ENCODE measurements at regions of chr2 and their contacts with region 1.

Region 1: GRCh38 chr2:127591221-127591923 is 54.6 kb upstream of the GPR17 start:
- DNase-seq: peak; percentile 66
- H3K4me3 ChIP-seq: no peak overlapping the region
- H3K27ac ChIP-seq: no peak overlapping the region
- H3K4me1 ChIP-seq: no peaks in the 10 kb centered on the region
- H3K27me3 ChIP-seq: no peaks in the 10 kb centered on the region
- CTCF ChIP-seq: peak; percentile 94 to 99
- POLR2A ChIP-seq: no peak

Region 2: DNA sequence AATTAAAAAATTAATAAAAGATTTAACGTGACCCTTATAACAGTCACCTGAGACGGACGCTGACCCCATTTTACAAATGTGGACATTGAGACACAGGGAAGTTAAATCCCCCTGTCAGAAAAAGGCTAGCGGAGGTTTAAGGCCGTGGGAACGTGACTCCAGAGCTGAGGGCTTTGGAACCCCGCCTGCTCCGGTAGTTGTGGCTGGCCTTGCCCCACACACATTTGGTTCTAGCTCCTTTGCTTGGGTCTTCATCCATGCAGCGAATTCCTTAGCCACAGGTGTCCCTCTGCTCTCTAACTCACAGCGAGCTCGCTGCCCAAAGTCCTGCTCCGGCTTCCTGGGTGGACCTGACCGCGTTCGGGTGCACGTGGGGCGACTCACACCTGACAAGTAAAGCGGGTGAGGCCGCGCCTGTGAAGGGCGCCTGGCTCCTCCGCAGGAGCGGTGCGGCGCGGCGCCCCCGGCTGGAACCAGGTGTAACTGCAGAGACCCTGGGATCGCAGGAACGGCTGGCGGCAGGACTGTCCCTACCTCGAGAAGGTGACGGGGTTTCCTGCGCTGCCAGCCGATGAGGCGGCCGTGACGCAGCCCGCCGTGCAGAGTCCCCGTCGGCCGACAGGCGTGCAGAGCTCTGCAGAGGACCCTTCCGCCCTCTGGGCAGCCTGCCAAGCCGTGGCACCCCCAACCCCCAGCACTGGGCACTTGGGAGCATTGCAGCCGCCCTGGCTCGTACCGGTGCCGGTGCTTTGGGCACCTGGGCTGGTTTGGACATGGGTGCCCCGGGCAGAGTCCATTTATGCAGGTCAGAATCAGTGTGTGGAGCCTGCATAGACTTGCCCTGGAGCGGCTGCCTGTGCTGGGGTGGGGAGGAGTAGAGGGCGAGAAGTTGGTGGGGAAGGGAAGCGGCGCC is 175.5 kb before region 1 on chr2:
- CTCF ChIA-PET with region 1: no interaction called
- POLR2A ChIA-PET with region 1: no interaction called
- dilution Hi-C with region 1: no loop called
- intact Hi-C with region 1: no loop called
- DNase-seq: peak; percentile 58
- H3K4me3 ChIP-seq: peak overlapping the region in 2 of 3 experiments; percentile 26 to 31
- H3K27ac ChIP-seq: no peak overlapping the region
- H3K4me1 ChIP-seq: peaks cover 35% of the 10 kb centered on the region
- H3K27me3 ChIP-seq: peaks cover 0 to 2% of the 10 kb centered on the region in 2 experiments
- CTCF ChIP-seq: peak; percentile 57 to 84
- POLR2A ChIP-seq: no peak

Region 3: GRCh38 chr2:127576433-127577207 is 14.8 kb before region 1 on chr2:
- CTCF ChIA-PET with region 1: interaction called, 61 read pairs
- POLR2A ChIA-PET with region 1: no interaction called
- dilution Hi-C with region 1: no loop called
- intact Hi-C with region 1: no loop called
- DNase-seq: no peak
- H3K4me3 ChIP-seq: no peak overlapping the region
- H3K27ac ChIP-seq: no peak overlapping the region
- H3K4me1 ChIP-seq: no peaks in the 10 kb centered on the region
- H3K27me3 ChIP-seq: peaks cover 2 to 3% of the 10 kb centered on the region in 2 experiments
- CTCF ChIP-seq: no peak
- POLR2A ChIP-seq: no peak

Region 4: DNA sequence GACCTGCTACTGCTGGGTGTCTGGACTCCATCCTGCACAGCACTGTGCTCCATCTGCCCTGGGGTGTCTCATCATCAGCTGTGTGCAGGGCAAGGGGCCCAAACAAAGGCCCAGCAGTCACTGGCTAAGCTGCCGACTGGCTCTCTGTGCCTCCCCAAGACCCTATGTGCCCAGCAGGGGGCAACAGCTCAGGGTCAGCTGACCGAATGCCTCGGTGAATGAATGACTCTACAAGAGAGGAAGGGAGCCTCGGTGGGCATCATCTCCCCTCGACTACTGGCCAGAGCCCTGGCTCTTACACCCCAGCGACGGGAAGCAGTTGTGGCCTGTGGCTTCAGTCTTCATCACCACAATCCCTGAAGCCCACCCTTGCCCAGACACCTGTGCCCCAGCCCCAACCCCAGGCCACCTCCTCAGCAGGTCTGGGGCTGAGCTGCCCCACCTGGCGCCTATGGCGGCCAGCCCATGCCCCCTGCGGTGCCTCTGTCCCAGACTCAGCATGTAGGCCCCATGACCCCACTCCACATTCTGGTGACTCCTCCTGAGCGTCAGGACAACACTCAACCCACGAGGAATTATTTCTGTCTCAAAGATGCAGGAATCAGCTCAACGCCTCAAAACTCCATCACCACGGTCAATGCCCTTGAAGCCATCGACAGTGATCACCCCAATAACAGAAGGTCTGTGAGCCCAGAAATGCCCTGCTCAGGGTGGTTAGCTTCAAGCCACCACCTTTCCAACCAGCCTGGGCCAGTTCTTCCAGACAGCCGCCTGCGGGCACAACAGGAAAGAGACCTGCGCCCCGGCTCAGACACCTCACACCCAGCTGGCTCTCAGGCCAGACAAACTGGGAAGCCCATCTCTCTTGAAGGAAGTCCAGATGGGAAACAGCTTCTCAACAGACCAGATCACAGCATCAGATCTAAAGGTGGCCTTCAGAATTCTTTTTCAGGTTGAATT is 53.0 kb after region 1 on chr2:
- CTCF ChIA-PET with region 1: interaction called, 424 read pairs
- POLR2A ChIA-PET with region 1: interaction called, 3 read pairs
- dilution Hi-C with region 1: no loop called
- intact Hi-C with region 1: loop called (anchors 1 kb)
- DNase-seq: no peak
- H3K4me3 ChIP-seq: no peak overlapping the region
- H3K27ac ChIP-seq: no peak overlapping the region
- H3K4me1 ChIP-seq: peaks cover 41% of the 10 kb centered on the region
- H3K27me3 ChIP-seq: no peaks in the 10 kb centered on the region
- CTCF ChIP-seq: peak in 1 of 2 donors; percentile 25
- POLR2A ChIP-seq: no peak

Region 5: DNA sequence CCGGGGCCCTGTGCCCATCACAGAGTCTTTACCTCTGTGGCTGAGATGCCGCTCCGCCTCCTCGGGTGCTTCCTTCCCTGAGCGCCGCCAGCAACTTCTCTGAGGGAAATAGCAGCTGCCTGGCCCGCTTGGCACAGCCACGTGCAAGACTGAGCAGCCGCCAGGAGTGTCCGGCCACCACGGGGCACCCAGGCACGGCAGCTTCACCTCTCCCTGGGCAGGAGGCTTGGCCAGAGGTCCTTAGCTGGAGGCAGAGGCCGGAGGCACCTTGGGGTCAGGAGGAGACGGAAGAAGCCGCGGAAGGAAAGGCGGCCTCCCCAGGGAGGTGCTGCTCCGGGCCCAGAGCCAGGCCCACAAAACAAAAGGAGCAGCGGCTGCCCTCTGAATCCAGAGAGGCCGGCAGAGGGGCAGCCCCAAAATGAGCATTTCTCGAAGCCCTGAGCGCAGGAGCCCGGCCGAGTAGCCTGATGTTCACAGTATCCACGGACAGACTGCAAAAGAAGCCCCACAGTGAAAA is 90.0 kb after region 1 on chr2:
- CTCF ChIA-PET with region 1: interaction called, 151 read pairs
- POLR2A ChIA-PET with region 1: no interaction called
- dilution Hi-C with region 1: no loop called
- intact Hi-C with region 1: no loop called
- DNase-seq: peak; percentile 47
- H3K4me3 ChIP-seq: no peak overlapping the region
- H3K27ac ChIP-seq: no peak overlapping the region
- H3K4me1 ChIP-seq: peaks cover 12% of the 10 kb centered on the region
- H3K27me3 ChIP-seq: no peaks in the 10 kb centered on the region
- CTCF ChIP-seq: no peak
- POLR2A ChIP-seq: no peak

Region 6: DNA sequence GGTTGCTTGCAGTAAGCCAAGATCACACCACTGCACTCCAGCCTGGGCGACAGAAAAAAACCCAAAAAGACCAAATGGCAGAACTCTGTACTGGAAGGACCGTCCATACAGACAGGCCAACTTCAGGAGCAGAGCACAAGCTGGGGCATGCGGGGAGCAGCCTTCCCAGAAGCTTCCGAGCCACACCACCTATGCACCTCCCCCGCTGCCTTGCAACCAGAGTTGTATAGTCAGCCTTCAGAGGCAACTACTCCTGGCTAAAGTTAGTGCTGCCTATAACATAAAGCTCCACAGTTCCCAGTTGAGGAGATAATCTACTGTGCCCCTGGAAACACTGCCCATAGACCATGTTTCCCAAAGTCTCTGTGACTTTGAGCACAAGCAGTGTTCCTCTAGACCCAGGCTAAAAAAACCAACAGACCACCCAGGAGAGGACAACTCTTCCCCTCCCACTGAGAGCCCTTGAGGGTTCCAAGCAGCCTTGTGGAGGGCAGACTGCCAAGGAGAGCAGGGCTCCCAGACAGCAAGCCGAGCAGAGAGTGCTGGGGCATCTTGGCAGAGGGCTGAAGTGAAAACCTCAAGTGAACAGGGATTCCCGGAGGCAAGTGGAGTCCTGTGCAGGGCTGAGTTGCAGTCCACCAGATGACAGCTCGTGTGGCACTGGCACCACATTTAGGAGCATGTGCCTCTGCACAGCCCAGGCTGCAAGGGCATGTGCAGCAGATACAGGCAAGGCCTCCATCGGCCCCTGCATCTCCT is 116.7 kb after region 1 on chr2:
- CTCF ChIA-PET with region 1: interaction called, 26 read pairs
- POLR2A ChIA-PET with region 1: no interaction called
- dilution Hi-C with region 1: no loop called
- intact Hi-C with region 1: loop called (anchors 2 kb)
- DNase-seq: no peak
- H3K4me3 ChIP-seq: no peak overlapping the region
- H3K27ac ChIP-seq: no peak overlapping the region
- H3K4me1 ChIP-seq: peaks cover 3% of the 10 kb centered on the region
- H3K27me3 ChIP-seq: no peaks in the 10 kb centered on the region
- CTCF ChIP-seq: no peak
- POLR2A ChIP-seq: no peak

Region 7: GRCh38 chr2:127884436-127885345 is 293.3 kb after region 1 on chr2:
- CTCF ChIA-PET with region 1: interaction called, 10 read pairs
- POLR2A ChIA-PET with region 1: no interaction called
- dilution Hi-C with region 1: no loop called
- intact Hi-C with region 1: no loop called
- DNase-seq: peak; percentile 24
- H3K4me3 ChIP-seq: peak overlapping the region; percentile 12 to 77 (median 53)
- H3K27ac ChIP-seq: peak overlapping the region; percentile 25
- H3K4me1 ChIP-seq: peaks cover 19% of the 10 kb centered on the region
- H3K27me3 ChIP-seq: no peaks in the 10 kb centered on the region
- CTCF ChIP-seq: no peak
- POLR2A ChIP-seq: no peak